ENCODE measurements at regions of chr1 and their contacts with region 1.

Region 1: DNA sequence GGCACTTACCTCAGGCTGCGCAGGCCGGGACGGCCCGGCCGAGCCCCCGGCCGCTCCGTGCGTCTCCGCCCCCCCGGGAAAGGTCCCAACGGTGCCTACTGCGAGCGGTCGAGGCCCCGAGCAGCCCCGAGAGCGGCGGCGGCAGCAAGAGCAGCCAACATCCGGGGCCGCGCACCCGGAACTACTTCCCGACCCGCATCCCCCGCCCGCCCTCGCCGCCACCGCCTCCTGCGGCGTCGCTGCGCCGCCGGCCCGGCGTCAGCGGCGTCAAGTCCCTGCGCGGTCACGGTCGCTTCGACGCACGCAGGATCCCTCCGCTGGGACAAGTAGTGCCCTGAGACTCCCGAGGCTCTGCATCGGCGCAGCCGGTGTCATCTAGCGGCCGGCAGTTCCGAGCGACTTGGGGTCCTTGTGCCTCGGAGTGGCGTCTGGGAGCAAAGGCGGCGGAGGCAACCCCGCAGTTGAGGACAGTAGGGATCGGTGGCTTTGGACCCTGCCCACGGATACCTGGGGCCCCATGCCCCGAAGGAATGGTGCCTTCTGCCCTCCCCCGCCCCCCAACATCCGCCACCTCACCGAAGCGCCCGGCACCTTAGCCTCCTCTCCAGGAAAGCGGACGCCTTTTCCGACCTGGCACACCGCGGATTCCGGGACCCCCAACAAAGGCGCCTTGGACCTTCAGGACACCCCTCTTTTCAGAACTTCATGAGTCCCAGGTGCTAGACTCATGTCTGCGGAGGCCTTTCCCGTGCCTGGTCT is at the start of gene FOXJ3:
- DNase-seq: peak; percentile 94 to 97
- ATAC-seq: peak; percentile 93 to 96 (median 94)
- H3K4me3 ChIP-seq: peak within 1 kb of the TSS; percentile 97
- H3K27ac ChIP-seq: peak within 1 kb of the TSS; percentile 98
- H3K4me1 ChIP-seq: peaks cover 35% of the 10 kb centered on the region
- H3K27me3 ChIP-seq: no peaks in the 10 kb centered on the region
- CTCF ChIP-seq: no peak
- total RNA-seq, gene FOXJ3: 47.9 to 53.1 (median 49.1) TPM

Region 2: DNA sequence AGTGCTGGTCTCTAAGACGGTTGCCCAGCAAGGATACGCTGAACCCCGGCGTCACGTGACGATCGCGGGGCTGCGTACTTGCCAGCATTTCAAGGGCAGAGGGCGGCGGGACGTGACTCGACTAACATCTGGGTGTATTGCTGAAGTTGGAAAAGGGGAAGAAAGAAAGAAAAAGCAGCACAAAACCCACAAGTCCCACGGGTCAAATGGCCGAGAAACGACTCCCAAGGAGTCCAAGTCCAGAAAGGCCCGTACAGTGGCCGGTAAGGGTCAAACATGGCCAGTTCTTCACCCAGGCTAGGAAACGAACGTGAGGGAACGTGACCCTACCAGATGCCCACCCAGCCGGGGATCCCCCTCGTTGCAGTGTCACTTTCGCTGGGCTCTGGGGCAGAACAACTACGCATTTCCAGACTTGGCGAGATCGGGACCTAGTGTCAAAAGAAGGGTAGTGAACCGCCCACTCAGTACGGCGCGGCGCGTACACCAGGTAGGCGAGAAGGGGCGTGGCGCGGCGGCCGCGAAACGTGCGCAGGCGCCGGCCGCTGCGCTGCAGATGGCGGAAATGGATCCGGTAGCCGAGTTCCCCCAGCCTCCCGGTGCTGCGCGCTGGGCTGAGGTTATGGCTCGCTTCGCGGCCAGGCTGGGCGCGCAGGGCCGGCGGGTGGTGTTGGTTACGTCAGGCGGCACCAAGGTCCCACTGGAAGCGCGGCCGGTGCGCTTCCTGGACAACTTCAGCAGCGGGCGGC is 121.0 kb after region 1 on chr1 and contains the starts of genes PPCS and ZMYND12:
- intact Hi-C with region 1: loop called in 1 of 2 experiments (anchors 2 kb)
- DNase-seq: peak; percentile 89 to 92
- ATAC-seq: peak; percentile 94 to 97 (median 96)
- H3K4me3 ChIP-seq: peak within 1 kb of the TSS; percentile 87
- H3K27ac ChIP-seq: peak within 1 kb of the TSS; percentile 90
- H3K4me1 ChIP-seq: peaks cover 6% of the 10 kb centered on the region
- H3K27me3 ChIP-seq: no peaks in the 10 kb centered on the region
- CTCF ChIP-seq: no peak
- total RNA-seq, gene PPCS: 26.1 to 41.0 (median 34.9) TPM
- total RNA-seq, gene ZMYND12: 0.76 to 2.7 (median 1.0) TPM

Region 3: GRCh38 chr1:42657971-42658879 is 323.0 kb after region 1 on chr1 and contains the start of gene PPIH:
- intact Hi-C with region 1: loop called in 1 of 2 experiments (anchors 10 kb)
- DNase-seq: peak; percentile 95 to 98
- ATAC-seq: peak; percentile 100
- H3K4me3 ChIP-seq: peak within 1 kb of the TSS; percentile 86
- H3K27ac ChIP-seq: peak within 1 kb of the TSS; percentile 85
- H3K4me1 ChIP-seq: peaks cover 6% of the 10 kb centered on the region
- H3K27me3 ChIP-seq: no peaks in the 10 kb centered on the region
- CTCF ChIP-seq: peak; percentile 44
- total RNA-seq, gene PPIH: 9.9 to 14.4 (median 10.8) TPM

Region 4: DNA sequence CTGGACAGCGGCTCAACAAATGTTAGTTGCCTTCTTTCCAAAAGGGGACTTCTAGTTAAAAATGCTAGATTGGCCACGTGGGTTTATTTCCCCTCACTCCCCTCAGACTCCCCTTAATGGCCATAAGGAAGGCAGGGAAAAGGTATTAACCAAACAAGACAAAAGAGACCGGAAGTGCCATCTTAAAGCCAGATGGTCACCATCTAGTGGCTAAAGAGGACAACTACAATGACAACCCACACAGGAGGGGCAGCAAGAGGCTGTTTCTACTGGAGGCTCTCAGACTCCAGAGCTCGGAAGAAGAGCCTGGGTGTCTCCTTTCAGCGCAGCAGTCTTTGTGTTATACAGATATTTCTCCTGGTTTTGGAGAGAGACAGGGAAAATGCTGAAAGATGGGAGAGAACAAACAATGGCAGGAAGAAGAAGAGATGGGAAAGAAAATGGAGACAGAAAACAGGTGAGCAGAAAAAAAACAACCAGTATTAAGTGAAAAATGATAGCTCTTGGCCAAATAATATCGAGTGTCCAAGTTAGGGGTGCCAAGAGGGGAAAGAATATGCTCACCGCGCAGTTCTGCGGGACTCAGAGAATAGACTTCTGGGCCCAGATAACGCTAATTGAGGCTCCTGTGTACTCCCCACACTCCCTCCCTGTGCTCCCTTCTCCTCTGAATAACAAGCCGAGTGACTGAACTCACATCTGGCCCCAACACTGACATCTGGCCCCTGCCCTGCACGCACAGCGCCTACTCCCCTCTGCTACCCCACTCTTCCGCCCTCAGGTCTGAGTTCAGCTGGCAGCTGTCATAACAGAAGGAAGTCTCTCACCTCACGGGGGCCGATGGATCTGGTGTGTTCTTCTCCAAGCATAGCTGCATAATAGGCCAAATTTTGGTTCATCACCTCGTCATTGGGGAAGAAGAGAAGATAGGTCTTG is 422.0 kb after region 1 on chr1:
- intact Hi-C with region 1: loop called in 1 of 2 experiments (anchors 10 kb)
- DNase-seq: no peak
- ATAC-seq: peak; percentile 40 to 82 (median 76)
- H3K4me3 ChIP-seq: no peak overlapping the region
- H3K27ac ChIP-seq: no peak overlapping the region
- H3K4me1 ChIP-seq: no peaks in the 10 kb centered on the region
- H3K27me3 ChIP-seq: no peaks in the 10 kb centered on the region
- CTCF ChIP-seq: peak; percentile 68